H1 (cell line): ENCODE measurements at regions of chr5 and their contacts with region 1.

Region 1: DNA sequence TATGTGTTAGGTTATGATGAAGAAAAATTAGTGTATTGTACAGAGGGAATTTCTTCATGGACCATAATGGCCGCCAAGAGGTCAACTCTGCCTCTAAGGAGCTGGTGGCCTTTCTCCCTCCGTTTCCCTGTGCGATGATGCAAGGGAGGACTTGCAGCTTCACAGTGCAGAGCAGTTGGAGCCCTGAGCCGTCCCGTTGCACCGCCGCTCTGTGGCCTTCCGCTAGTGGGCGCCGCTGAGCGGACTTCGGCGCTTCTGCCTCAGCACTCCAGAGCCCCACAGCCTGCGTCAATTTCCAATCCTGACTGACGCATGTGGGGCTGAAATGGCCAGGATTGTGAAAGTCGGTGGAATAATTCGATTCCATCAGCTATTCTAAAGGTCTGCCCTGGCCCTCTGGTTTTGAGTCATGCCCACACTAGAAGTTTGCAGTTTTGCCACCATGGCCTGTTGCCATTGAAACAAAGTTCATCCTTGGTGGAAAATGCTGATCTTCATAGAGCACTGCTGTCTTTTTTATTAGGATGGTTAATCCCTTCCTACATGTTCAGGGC is 22.7 kb upstream of the LECT2 start:
- DNase-seq: peak; percentile 77 to 96
- H3K4me3 ChIP-seq: no peak overlapping the region
- H3K27ac ChIP-seq: no peak overlapping the region
- H3K4me1 ChIP-seq: peaks cover 0 to 6% (median 0%) of the 10 kb centered on the region in 4 experiments; a peak in 2 of 7 replicates
- H3K27me3 ChIP-seq: peaks cover 0 to 3% (median 0%) of the 10 kb centered on the region in 4 experiments; a peak in 2 of 7 replicates
- CTCF ChIP-seq: peak; percentile 93 to 99 (median 94)
- EP300 ChIP-seq: no peak
- POLR2A ChIP-seq: no peak
- RAD21 ChIP-seq: peak; percentile 69 to 82

Region 2: DNA sequence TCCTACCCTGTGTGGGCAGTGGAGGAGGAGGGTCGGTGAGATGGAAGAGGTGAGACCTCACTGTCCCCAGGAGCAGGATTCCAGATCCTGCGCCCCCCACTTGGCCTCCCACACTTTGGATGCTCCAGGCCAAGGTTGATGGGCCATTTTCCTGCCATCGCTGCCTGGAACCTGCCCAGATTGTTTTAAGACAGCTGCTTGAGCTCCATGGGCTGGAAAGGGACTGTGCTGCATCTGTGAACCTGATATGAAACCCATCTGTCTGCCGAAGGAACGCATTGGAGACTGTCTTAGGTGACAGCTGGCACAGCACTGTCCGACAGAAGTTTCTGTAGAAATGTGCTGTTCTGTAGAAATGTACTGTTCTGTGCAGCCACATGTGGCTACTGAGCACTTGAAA is 215.7 kb before region 1 on chr5:
- CTCF ChIA-PET with region 1: no interaction called
- POLR2A ChIA-PET with region 1: no interaction called
- DNase-seq: no peak
- H3K4me3 ChIP-seq: no peak overlapping the region
- H3K27ac ChIP-seq: no peak overlapping the region
- H3K4me1 ChIP-seq: no peaks in the 10 kb centered on the region
- H3K27me3 ChIP-seq: peaks cover 0 to 2% (median 0%) of the 10 kb centered on the region in 4 experiments; a peak in 1 of 7 replicates
- CTCF ChIP-seq: no peak
- EP300 ChIP-seq: no peak
- POLR2A ChIP-seq: no peak
- RAD21 ChIP-seq: no peak

Region 3: DNA sequence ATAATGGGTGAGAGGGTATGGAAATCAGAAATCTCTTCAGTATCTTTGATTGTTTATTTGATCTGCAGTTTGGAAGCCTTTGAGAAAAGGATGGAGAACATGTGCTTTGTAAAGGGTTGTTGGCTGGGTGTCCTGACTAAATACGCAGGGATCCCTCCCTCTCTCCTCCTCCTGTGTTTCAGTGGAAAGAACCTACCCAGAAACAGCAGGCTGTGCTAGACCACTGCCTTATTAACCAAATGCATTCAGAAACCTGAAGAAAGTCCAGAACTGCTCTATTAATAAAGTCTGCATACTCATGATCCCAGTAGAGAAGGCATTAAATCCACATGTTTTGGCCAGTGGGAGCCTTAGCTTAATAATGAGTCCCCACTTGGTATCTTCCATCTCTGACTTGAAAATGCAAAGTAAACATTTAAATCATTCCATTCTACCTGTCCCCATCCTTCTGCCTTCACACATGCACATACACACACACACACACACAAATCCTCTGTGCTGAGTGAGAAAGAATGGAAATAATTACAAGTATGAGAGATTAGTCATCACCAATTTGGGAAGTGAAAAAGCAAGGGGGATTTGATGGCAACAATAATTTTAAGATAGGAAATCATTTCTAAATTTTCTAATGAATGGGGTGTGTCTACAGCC is 12.7 kb before region 1 on chr5:
- CTCF ChIA-PET with region 1: interaction called, 15 read pairs
- POLR2A ChIA-PET with region 1: no interaction called
- DNase-seq: no peak
- H3K4me3 ChIP-seq: no peak overlapping the region
- H3K27ac ChIP-seq: no peak overlapping the region
- H3K4me1 ChIP-seq: no peaks in the 10 kb centered on the region
- H3K27me3 ChIP-seq: no peaks in the 10 kb centered on the region
- CTCF ChIP-seq: no peak
- EP300 ChIP-seq: no peak
- POLR2A ChIP-seq: no peak
- RAD21 ChIP-seq: no peak

Region 4: DNA sequence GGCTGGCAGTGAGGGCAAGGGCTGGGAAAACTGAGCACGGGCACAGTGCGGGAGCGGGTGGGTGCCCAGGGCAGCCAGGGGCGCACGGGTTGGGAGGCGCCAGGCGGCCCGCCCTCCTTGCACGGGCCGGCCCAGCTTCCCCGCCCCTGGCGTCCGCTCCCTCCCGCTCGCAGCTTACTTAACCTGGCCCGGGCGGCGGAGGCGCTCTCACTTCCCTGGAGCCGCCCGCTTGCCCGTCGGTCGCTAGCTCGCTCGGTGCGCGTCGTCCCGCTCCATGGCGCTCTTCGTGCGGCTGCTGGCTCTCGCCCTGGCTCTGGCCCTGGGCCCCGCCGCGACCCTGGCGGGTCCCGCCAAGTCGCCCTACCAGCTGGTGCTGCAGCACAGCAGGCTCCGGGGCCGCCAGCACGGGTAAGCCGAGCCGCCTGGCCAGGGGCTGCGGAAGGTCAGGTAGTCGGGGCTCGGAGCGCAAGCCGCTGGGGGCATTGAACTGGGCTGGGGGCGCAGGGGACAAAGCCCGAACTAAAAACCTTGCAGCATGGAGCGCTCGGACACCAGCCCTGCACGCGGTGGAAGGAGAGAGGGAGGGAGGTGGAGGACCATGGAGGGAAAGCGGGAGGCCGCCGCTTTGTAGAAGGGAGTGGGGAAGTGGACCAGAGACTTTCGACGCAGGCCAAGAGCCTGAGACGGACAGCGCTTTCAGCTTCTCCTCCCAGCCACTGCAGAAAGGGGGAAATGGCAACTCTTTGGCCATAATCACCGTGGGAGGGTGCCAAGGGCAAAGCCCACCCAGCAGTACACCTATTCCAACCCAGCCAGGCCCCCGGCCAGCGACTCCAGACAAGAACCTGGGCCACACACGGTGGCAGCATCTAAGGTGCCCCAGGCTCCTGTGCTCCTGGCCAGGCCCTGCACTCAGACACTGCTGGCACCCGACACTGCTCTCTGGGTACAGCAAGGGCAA is 51.6 kb after region 1 on chr5 and contains the start of gene TGFBI:
- CTCF ChIA-PET with region 1: interaction called, 11 read pairs
- POLR2A ChIA-PET with region 1: no interaction called
- DNase-seq: peak; percentile 27 to 79
- H3K4me3 ChIP-seq: peak within 1 kb of the TSS; percentile 28 to 74 (median 48)
- H3K27ac ChIP-seq: no peak within 1 kb of the TSS
- H3K4me1 ChIP-seq: peaks cover 0 to 4% (median 1%) of the 10 kb centered on the region in 4 experiments; a peak in 4 of 7 replicates
- H3K27me3 ChIP-seq: peaks cover 8 to 39% (median 35%) of the 10 kb centered on the region in 4 experiments
- CTCF ChIP-seq: peak in 1 of 3 experiments; percentile 1; a peak in 1 of 4 replicates
- EP300 ChIP-seq: no peak
- POLR2A ChIP-seq: peak in 1 of 2 experiments; percentile 56; a peak in 1 of 3 replicates
- RAD21 ChIP-seq: no peak; a peak in 1 of 4 replicates
- total RNA-seq, gene TGFBI: 5.9 and 8.5 TPM in 2 replicates